Posterior vena cava (tissue), 2 donors: ENCODE measurements at regions of chr5 and their contacts with region 1.

Region 1: GRCh38 chr5:180194410-180195345 is 14.3 kb downstream of the RASGEF1C start:
- DNase-seq: peak; percentile 66

Region 2: GRCh38 chr5:179044765-179045164 is 1149.9 kb before region 1 on chr5:
- intact Hi-C with region 1: loop called in 1 of 2 experiments (anchors 5 kb)
- DNase-seq: no peak

Region 3: GRCh38 chr5:180209137-180209581 is 14.5 kb after region 1 on chr5 and contains the start of gene RASGEF1C:
- intact Hi-C with region 1: no loop called
- DNase-seq: no peak
- total RNA-seq, gene RASGEF1C: 0.24 TPM in 1 of 2 donors, not detected in the other

Region 4: DNA sequence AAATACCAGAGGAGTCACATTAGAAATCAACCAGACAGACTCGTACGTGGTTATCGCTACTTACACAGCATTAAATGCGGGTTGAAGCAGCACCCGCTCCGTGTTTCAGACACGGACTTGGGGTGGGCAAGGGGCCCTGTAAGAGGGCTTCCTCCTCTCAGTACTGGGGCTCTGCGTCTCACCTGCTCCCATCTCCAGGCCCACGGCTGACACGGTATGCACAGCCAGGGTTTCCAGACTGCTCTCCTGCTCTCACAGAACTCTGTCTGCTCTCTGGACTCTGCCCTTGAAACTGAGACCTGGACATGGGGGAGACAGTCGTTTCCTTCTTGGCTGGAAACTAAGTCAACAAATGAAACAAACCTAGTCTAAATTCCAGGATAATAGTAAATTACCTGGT is 39.1 kb after region 1 on chr5:
- intact Hi-C with region 1: no loop called
- DNase-seq: peak; percentile 41